IMR-90 (cell line): ENCODE measurements at regions of chr2 and their contacts with region 1.

Region 1: DNA sequence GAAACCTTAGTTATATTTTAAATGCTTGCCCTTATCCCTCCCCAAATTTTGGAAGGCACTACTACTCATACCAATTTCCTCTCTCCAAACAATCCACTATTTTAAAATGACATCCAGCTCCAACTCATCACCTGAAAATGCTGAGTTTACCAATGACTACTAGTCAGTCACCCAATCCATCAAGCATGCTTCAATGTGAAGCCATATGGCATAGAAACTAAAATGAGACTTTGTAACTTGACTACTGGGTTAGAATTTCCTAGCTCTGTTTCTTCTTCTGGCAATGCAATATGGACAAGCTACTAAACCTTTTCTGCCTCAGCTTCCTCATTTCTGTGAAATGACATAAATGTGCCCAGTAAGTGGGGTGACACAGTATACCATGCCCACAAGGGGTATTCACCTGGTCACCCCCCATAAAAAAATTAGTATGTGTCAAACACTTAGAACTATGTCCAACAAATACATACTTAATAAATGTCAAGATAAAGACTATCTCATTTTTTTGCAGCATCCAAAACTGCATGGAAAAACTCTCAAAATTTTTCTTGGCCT is 10.0 kb upstream of the STPG4 start:
- DNase-seq: peak; percentile 65
- ATAC-seq: peak; percentile 13; the same call in 1 of the 2 replicates
- H3K4me3 ChIP-seq: no peak overlapping the region
- H3K27ac ChIP-seq: no peak overlapping the region
- H3K4me1 ChIP-seq: peaks cover 7% of the 10 kb centered on the region
- H3K27me3 ChIP-seq: no peaks in the 10 kb centered on the region
- CTCF ChIP-seq: no peak
- POLR2A ChIP-seq: no peak
- RAD21 ChIP-seq: no peak

Region 2: GRCh38 chr2:47088668-47089462 is 76.2 kb before region 1 on chr2:
- CTCF ChIA-PET with region 1: no interaction called
- POLR2A ChIA-PET with region 1: no interaction called
- dilution Hi-C with region 1: no loop called
- in situ Hi-C with region 1: no loop called
- intact Hi-C with region 1: no loop called
- DNase-seq: peak; percentile 77
- ATAC-seq: peak; percentile 63
- H3K4me3 ChIP-seq: no peak overlapping the region
- H3K27ac ChIP-seq: peak overlapping the region; percentile 16; the same call in 1 of the 2 replicates
- H3K4me1 ChIP-seq: peaks cover 16% of the 10 kb centered on the region
- H3K27me3 ChIP-seq: no peaks in the 10 kb centered on the region
- CTCF ChIP-seq: no peak
- POLR2A ChIP-seq: no peak
- RAD21 ChIP-seq: no peak

Region 3: GRCh38 chr2:47190188-47190881 is 25.3 kb after region 1 on chr2:
- CTCF ChIA-PET with region 1: no interaction called
- POLR2A ChIA-PET with region 1: interaction called, 16 read pairs
- dilution Hi-C with region 1: no loop called
- in situ Hi-C with region 1: no loop called
- intact Hi-C with region 1: no loop called
- DNase-seq: peak; percentile 84
- ATAC-seq: peak; percentile 10
- H3K4me3 ChIP-seq: no peak overlapping the region
- H3K27ac ChIP-seq: peak overlapping the region; percentile 77
- H3K4me1 ChIP-seq: peaks cover 31% of the 10 kb centered on the region
- H3K27me3 ChIP-seq: no peaks in the 10 kb centered on the region
- CTCF ChIP-seq: no peak
- POLR2A ChIP-seq: no peak; the same call in 1 of the 2 replicates
- RAD21 ChIP-seq: no peak

Region 4: GRCh38 chr2:47558768-47559684 is 393.9 kb after region 1 on chr2:
- CTCF ChIA-PET with region 1: no interaction called
- POLR2A ChIA-PET with region 1: no interaction called
- dilution Hi-C with region 1: no loop called
- in situ Hi-C with region 1: no loop called
- intact Hi-C with region 1: no loop called
- DNase-seq: peak; percentile 41
- ATAC-seq: peak; percentile 40; the same call in 1 of the 2 replicates
- H3K4me3 ChIP-seq: no peak overlapping the region
- H3K27ac ChIP-seq: no peak overlapping the region
- H3K4me1 ChIP-seq: no peaks in the 10 kb centered on the region
- H3K27me3 ChIP-seq: peaks cover 37% of the 10 kb centered on the region
- CTCF ChIP-seq: no peak
- POLR2A ChIP-seq: no peak
- RAD21 ChIP-seq: no peak